ENCODE measurements at regions of chr12 and their contacts with region 1.

Region 1: DNA sequence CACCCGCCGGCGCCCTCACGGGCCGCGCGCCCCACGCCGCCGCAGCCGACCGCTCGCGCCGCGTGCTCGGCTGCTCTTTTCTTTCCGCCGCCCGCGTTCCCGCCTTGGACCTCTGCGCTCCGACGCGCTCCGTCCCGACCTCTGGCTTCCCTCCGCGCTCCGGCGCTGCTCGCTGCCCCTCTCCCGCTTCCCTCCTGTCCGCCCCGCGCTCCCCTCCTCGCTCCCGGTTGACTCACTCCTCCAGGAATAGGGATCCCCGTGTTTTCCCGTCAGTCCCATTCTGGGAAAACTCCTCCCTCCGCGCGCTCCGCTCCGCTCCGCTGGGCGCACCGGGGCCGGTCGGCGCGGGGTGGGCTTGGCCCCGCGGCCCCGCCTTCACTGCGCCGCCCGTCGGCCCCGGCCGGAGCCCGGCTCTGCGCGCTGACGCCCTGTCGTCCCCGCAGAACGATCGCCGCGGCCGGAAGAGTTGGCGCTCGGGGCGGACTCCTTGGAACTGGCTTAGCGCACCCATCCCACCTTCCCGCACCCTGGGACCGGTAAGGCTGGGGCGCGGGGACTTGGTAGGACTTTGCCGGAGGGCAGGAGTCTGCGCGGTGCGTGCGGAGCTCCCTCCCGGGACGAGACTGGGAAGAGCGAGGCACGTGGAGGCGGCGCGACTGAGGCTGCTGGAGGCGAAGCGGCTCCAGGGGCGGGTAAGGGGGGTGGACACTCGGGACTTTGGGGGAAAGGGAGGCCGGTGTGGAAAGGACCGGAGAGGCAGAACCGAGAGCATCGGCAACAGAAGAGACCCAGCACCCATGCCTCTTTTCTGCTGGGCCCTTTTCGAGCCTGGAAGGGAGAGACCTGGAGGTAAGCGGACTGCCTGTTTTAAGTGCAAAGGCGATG is 550 bp downstream of the TEAD4 start:
- DNase-seq: peak; percentile 72
- H3K4me3 ChIP-seq: peak overlapping the region; percentile 55 to 75 (median 65)
- H3K27ac ChIP-seq: peak overlapping the region; percentile 69
- H3K4me1 ChIP-seq: peaks cover 45% of the 10 kb centered on the region
- H3K27me3 ChIP-seq: no peaks in the 10 kb centered on the region
- CTCF ChIP-seq: no peak
- POLR2A ChIP-seq: no peak

Region 2: DNA sequence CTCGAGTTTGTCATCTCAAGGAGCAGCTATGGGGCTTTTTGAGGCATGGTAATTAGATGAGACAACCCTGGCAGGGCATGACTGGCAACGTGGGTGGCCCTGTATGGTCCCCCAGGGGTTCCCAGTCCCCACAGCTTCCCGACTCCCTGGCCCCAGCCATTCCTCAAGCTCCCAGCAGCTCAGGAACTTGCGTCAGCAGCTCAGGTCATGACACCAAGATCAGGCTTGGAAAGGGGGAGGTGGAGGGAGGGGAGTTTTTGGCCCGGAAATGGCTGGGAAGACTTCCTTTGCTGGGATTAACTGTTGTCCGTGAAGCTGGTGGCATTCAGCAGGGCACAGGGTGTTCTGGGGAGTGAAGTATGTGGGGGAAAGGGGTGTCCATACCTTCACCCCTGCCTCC is 114.5 kb before region 1 on chr12:
- CTCF ChIA-PET with region 1: interaction called, 4 read pairs
- POLR2A ChIA-PET with region 1: no interaction called
- dilution Hi-C with region 1: no loop called
- intact Hi-C with region 1: loop called (anchors 5 kb)
- DNase-seq: peak; percentile 74
- H3K4me3 ChIP-seq: no peak overlapping the region
- H3K27ac ChIP-seq: peak overlapping the region; percentile 75
- H3K4me1 ChIP-seq: peaks cover 23% of the 10 kb centered on the region
- H3K27me3 ChIP-seq: no peaks in the 10 kb centered on the region
- CTCF ChIP-seq: no peak
- POLR2A ChIP-seq: peak; percentile 65

Region 3: GRCh38 chr12:2890388-2891239 is 69.1 kb before region 1 on chr12 and contains the start of gene TULP3:
- CTCF ChIA-PET with region 1: interaction called, 6 read pairs
- POLR2A ChIA-PET with region 1: interaction called, 5 read pairs
- dilution Hi-C with region 1: no loop called
- intact Hi-C with region 1: loop called (anchors 1 kb)
- DNase-seq: peak; percentile 99
- H3K4me3 ChIP-seq: peak within 1 kb of the TSS; percentile 32 to 76 (median 75)
- H3K27ac ChIP-seq: peak within 1 kb of the TSS; percentile 59
- H3K4me1 ChIP-seq: peaks cover 11% of the 10 kb centered on the region
- H3K27me3 ChIP-seq: no peaks in the 10 kb centered on the region
- CTCF ChIP-seq: peak in 1 of 2 donors; percentile 18
- POLR2A ChIP-seq: peak; percentile 86
- total RNA-seq, gene TULP3: 30.8 and 32.9 TPM in 2 replicates

Region 4: DNA sequence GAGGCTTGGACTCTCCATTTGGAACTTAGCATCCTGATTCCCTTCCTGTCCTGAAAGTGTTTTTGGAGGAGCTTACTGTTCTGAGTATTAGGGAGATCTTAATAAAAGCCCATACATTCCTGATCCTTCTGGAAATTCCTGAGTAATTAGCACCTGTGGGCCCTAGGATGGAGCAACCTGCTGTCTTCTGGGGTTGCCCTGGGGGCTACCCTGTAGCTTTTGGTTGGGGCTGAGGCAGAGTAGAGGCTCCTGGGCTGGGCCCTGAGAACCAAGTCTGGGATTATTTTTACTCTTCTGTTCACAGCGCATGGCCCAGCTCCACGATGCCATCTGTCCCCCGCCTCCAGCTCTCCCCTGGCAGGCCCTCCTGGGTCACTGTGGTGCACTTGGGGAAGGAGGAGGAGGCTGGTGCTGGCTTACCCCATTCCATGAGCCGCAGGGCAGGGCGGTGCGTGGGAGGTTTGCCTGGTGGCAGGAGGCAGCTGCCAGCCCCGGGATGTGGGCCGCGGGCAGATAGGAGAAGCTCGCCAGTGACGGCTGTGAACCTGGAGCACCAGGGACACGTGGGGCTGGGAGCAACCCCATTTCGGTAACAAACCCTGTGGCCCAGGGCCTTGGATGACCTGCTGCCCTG is 22.5 kb after region 1 on chr12:
- CTCF ChIA-PET with region 1: interaction called, 4 read pairs
- POLR2A ChIA-PET with region 1: no interaction called
- dilution Hi-C with region 1: no loop called
- intact Hi-C with region 1: loop called (anchors 2 kb)
- DNase-seq: no peak
- H3K4me3 ChIP-seq: no peak overlapping the region
- H3K27ac ChIP-seq: no peak overlapping the region
- H3K4me1 ChIP-seq: peaks cover 10% of the 10 kb centered on the region
- H3K27me3 ChIP-seq: no peaks in the 10 kb centered on the region
- CTCF ChIP-seq: no peak
- POLR2A ChIP-seq: no peak

Region 5: GRCh38 chr12:3014641-3015040 is 54.9 kb after region 1 on chr12:
- CTCF ChIA-PET with region 1: no interaction called
- POLR2A ChIA-PET with region 1: no interaction called
- dilution Hi-C with region 1: no loop called
- intact Hi-C with region 1: loop called (anchors 2 kb)
- DNase-seq: no peak
- H3K4me3 ChIP-seq: no peak overlapping the region
- H3K27ac ChIP-seq: peak overlapping the region; percentile 45
- H3K4me1 ChIP-seq: peaks cover 20% of the 10 kb centered on the region
- H3K27me3 ChIP-seq: no peaks in the 10 kb centered on the region
- CTCF ChIP-seq: no peak
- POLR2A ChIP-seq: no peak

Region 6: GRCh38 chr12:3097186-3097804 is 137.5 kb after region 1 on chr12:
- CTCF ChIA-PET with region 1: no interaction called
- POLR2A ChIA-PET with region 1: no interaction called
- dilution Hi-C with region 1: no loop called
- intact Hi-C with region 1: loop called (anchors 5 kb)
- DNase-seq: peak; percentile 87
- H3K4me3 ChIP-seq: no peak overlapping the region
- H3K27ac ChIP-seq: peak overlapping the region; percentile 73
- H3K4me1 ChIP-seq: peaks cover 27% of the 10 kb centered on the region
- H3K27me3 ChIP-seq: no peaks in the 10 kb centered on the region
- CTCF ChIP-seq: no peak
- POLR2A ChIP-seq: peak; percentile 57